PC-3 (cell line): ENCODE measurements at regions of chr1 and their contacts with region 1.

Region 1: DNA sequence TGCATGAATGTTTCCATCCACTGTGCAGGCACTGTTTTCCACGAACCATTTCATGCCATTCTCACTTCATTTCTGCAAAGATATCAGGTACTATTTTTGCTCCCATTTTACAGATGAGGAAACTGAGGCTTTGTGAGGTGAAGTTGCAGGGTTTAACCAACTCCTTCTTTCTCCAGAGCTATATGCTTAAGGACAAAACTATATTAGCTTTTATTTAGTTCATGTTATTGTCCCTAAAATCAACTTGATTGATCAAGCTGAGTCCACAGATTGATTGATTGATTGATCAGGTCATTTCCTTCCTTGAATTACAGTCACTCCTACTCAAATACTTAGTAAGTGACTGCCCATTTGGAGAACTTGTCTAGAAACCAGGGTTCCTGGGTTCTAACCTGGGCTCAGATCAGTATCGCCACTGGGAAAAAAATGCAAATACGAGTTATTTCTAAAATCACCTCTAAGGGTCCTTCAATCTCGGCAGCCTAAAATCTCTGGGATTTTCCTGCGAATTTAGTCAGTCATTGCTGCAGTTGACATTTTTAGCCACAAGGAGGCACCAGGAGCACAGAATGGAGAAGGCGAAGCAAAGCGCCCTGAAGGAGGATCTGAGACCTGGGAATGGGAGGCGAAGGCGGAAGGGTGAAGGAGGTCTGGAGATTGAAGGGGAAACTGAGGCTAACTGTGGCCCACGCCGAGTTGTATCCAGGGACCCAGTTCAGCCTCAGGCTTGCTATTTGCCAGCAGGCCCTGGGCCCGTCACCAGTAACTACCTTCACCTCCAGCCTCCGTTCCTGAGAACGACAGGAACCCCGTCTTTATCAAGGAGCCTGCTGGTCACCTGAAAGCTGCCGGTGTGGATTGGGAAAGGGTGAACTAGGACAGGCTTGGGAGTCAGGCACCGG is 14.3 kb upstream of the MUL1 start:
- DNase-seq: peak; percentile 96
- ATAC-seq: peak; percentile 70
- H3K4me3 ChIP-seq: no peak overlapping the region
- H3K27ac ChIP-seq: no peak overlapping the region
- H3K4me1 ChIP-seq: no peaks in the 10 kb centered on the region
- H3K27me3 ChIP-seq: no peaks in the 10 kb centered on the region
- CTCF ChIP-seq: peak; percentile 95

Region 2: GRCh38 chr1:20233394-20233793 is 288.8 kb before region 1 on chr1:
- CTCF ChIA-PET with region 1: no interaction called
- POLR2A ChIA-PET with region 1: no interaction called
- intact Hi-C with region 1: no loop called
- DNase-seq: peak; percentile 70
- ATAC-seq: peak; percentile 90
- H3K4me3 ChIP-seq: no peak overlapping the region
- H3K27ac ChIP-seq: peak overlapping the region; percentile 47
- H3K4me1 ChIP-seq: peaks cover 34% of the 10 kb centered on the region
- H3K27me3 ChIP-seq: no peaks in the 10 kb centered on the region
- CTCF ChIP-seq: peak; percentile 74

Region 3: DNA sequence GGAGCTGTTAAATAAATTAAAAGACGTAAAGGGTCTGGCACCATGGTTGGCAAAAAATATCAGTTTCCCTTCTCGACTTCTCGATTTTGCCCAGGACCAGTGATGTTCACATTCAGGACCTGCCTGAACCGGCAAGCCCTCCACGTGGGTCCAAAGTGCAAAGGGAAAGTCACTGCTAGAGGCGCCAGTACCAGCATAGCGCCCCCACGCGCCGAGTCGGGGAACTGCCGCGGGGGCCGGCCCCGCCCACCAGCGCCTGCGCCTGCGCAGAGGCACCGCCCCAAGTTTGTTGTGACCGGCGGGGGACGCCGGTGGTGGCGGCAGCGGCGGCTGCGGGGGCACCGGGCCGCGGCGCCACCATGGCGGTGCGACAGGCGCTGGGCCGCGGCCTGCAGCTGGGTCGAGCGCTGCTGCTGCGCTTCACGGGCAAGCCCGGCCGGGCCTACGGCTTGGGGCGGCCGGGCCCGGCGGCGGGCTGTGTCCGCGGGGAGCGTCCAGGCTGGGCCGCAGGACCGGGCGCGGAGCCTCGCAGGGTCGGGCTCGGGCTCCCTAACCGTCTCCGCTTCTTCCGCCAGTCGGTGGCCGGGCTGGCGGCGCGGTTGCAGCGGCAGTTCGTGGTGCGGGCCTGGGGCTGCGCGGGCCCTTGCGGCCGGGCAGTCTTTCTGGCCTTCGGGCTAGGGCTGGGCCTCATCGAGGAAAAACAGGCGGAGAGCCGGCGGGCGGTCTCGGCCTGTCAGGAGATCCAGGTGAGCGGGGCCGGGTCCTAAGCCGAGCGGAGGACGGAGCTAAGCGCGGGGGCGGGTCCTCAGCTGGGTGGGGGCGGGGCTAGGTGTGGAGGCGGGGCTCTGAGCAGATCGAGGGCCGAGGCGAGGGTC is 111.2 kb after region 1 on chr1 and contains the start of gene PINK1:
- CTCF ChIA-PET with region 1: interaction called, 3 read pairs
- POLR2A ChIA-PET with region 1: no interaction called
- intact Hi-C with region 1: loop called (anchors 2 kb)
- DNase-seq: peak; percentile 81
- ATAC-seq: peak; percentile 89
- H3K4me3 ChIP-seq: peak within 1 kb of the TSS; percentile 74
- H3K27ac ChIP-seq: peak within 1 kb of the TSS; percentile 62
- H3K4me1 ChIP-seq: peaks cover 18% of the 10 kb centered on the region
- H3K27me3 ChIP-seq: no peaks in the 10 kb centered on the region
- CTCF ChIP-seq: peak; percentile 94
- total RNA-seq, gene PINK1: 129 and 160 TPM in 2 replicates

Region 4: DNA sequence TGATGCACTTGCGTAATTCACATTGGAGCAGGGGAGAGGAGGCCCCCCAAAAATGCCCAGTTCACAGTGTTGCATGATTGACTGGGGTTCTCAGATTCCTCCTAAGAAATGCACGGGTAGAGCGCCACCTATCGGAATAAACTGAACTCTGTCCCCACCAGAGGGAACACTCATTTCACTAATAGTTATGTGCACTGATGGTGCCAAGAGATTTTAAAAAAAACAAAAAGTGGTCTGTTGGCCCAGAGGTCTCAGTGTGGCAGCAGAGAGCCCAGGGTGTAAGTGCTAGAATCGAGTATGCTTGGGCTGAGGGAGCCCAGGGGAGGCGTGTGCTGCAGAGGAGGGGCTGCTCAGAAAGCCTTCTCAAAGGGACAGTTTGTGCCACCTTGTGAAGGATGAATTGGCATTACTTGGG is 118.0 kb after region 1 on chr1:
- CTCF ChIA-PET with region 1: no interaction called
- POLR2A ChIA-PET with region 1: no interaction called
- intact Hi-C with region 1: loop called (anchors 1 kb)
- DNase-seq: peak; percentile 74
- ATAC-seq: peak; percentile 79
- H3K4me3 ChIP-seq: no peak overlapping the region
- H3K27ac ChIP-seq: no peak overlapping the region
- H3K4me1 ChIP-seq: peaks cover 2% of the 10 kb centered on the region; the same call in 1 of the 2 replicates
- H3K27me3 ChIP-seq: no peaks in the 10 kb centered on the region
- CTCF ChIP-seq: peak; percentile 90